ENCODE measurements at regions of chr17 and their contacts with region 1.

Region 1: GRCh38 chr17:19410875-19411620 is at the start of gene RNF112:
- DNase-seq: no peak
- H3K4me3 ChIP-seq: peak within 1 kb of the TSS; percentile 29
- CTCF ChIP-seq: peak; percentile 8

Region 2: DNA sequence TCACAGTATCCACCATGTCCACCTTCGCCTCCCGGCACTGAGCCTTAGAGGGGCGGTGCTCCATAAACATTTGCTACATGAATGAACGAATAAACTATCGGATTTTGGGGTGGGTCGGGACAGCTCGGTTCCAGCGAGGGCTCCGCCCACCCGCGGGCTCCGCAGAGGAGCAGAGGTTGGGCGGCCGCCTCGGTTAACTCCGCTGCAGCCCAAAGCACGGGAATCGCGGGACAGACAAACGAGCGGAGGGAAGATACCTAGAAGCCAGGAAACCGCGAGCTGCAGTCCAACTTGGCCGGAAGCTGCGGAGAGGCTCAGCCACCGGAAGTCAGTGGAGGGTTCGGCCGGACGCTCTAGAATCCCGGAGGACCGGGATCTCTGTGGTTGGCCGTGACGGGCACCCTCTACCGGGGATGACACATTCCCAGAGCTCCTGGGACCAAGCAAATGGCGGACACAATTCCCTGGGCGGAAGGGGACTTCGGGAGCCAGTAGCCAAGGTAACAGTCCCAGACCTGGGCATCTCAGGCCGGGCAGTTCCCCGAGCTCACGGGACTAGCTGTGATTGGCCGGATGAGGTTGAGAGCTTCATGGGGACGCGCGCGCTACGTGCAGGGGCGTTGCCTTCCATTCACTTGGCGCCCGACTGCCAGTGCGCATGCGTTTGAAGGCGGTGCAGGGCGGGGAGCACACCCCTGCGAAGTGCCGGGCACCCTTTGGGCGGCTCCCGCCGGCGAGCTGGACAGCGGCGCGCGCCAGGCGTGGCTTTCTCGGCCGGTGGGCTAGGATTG is 33.3 kb before region 1 on chr17:
- CTCF ChIA-PET with region 1: interaction called, 3 read pairs
- POLR2A ChIA-PET with region 1: interaction called, 12 read pairs
- DNase-seq: peak; percentile 90
- H3K4me3 ChIP-seq: peak overlapping the region; percentile 87
- CTCF ChIP-seq: peak; percentile 9

Region 3: DNA sequence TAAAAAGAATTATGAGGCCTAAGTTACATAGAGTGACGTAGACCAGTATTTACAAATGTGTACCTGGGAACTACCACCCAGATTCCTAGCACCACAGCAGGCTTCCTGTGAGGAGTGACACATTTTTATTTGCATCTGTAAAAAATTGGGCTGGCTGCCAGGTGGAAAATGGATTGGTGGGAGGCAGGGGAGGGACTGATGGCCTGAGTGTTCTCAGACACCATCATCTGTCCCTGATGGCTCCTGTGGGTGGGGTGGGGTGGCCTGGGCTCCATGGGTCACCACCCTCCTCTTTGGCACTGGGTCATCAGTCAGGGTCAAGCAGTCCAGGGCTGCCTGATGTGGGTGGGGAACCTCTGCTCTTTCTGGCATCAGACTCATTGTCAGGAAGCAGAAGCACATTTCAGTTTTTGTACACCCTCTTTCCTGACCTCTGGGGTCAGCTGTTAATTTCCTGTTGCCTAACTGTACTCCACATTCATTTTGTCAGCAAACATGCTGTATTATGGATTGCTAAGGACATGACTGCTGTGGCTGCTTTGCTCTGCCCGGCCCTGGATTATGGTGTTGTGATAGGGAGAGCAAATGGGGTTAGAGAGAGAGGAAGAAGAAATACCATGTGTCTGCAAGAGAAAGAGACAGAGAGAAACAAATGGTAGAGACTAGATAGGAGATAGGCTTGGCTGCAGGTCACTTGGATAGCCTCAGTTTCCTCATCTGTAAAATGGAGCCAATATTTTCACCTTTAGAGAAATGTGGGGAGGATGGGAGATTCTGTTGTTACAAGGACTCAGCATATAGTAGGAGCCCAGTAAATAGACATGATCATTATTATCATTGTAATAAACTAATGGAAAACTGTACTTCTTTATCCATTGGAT is 12.5 kb before region 1 on chr17:
- CTCF ChIA-PET with region 1: no interaction called
- POLR2A ChIA-PET with region 1: no interaction called
- DNase-seq: no peak
- H3K4me3 ChIP-seq: no peak overlapping the region
- CTCF ChIP-seq: no peak